ENCODE measurements at regions of chr7 and their contacts with region 1.

Region 1: GRCh38 chr7:27774717-27775328 is 34.9 kb downstream of the TAX1BP1 start:
- DNase-seq: peak in 4 of 9 donors; percentile 6 to 21 (median 15)
- ATAC-seq: no peak
- H3K4me3 ChIP-seq: no peak overlapping the region
- H3K4me3 Mint-ChIP-seq: no peak overlapping the region
- H3K27ac ChIP-seq: no peak overlapping the region
- H3K27ac Mint-ChIP-seq: no peak overlapping the region
- H3K4me1 ChIP-seq: no peaks in the 10 kb centered on the region
- H3K4me1 Mint-ChIP-seq: peaks cover 6 to 72% (median 49%) of the 10 kb centered on the region in 7 donors
- H3K27me3 ChIP-seq: no peaks in the 10 kb centered on the region
- H3K27me3 Mint-ChIP-seq: no peaks in the 10 kb centered on the region

Region 2: GRCh38 chr7:27210441-27211083 is 564.3 kb before region 1 on chr7:
- CTCF ChIA-PET with region 1: no interaction called
- POLR2A ChIA-PET with region 1: no interaction called
- intact Hi-C with region 1: loop called (anchors 1 to 5 kb)
- DNase-seq: peak in 2 of 9 donors; percentile 28 to 47
- ATAC-seq: peak; percentile 74
- H3K4me3 ChIP-seq: no peak overlapping the region
- H3K4me3 Mint-ChIP-seq: peak overlapping the region; percentile 35 to 79 (median 66)
- H3K27ac ChIP-seq: no peak overlapping the region
- H3K27ac Mint-ChIP-seq: no peak overlapping the region
- H3K4me1 ChIP-seq: peaks cover 4 to 7% of the 10 kb centered on the region in 2 donors
- H3K4me1 Mint-ChIP-seq: peaks cover 0 to 29% (median 18%) of the 10 kb centered on the region in 7 donors
- H3K27me3 ChIP-seq: peaks cover 21 to 64% of the 10 kb centered on the region in 2 donors
- H3K27me3 Mint-ChIP-seq: peaks cover 80 to 97% (median 93%) of the 10 kb centered on the region in 5 donors

Region 3: DNA sequence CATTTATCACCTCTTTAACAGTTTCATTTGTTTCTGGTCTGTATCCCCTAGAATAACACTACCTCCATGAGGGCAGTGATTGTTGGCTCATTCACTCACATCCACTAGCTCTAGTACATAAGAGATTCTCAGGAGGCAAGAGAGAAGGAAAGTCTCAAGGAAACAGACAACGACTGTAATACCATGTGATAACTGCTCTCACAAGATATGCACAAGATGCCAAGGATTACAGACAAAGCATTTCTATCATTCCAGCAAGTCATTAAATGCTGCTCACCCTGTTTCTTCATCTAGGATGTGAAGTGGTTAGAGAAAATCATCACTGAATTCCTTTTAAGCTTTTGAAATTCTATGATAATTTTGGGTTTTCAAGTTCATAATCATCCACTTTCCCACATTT is 227.4 kb before region 1 on chr7:
- CTCF ChIA-PET with region 1: no interaction called
- POLR2A ChIA-PET with region 1: no interaction called
- intact Hi-C with region 1: no loop called
- DNase-seq: no peak
- ATAC-seq: no peak
- H3K4me3 ChIP-seq: no peak overlapping the region
- H3K4me3 Mint-ChIP-seq: no peak overlapping the region
- H3K27ac ChIP-seq: no peak overlapping the region
- H3K27ac Mint-ChIP-seq: no peak overlapping the region
- H3K4me1 ChIP-seq: no peaks in the 10 kb centered on the region
- H3K4me1 Mint-ChIP-seq: peaks cover 0 to 6% (median 0%) of the 10 kb centered on the region in 7 donors
- H3K27me3 ChIP-seq: no peaks in the 10 kb centered on the region
- H3K27me3 Mint-ChIP-seq: no peaks in the 10 kb centered on the region

Region 4: DNA sequence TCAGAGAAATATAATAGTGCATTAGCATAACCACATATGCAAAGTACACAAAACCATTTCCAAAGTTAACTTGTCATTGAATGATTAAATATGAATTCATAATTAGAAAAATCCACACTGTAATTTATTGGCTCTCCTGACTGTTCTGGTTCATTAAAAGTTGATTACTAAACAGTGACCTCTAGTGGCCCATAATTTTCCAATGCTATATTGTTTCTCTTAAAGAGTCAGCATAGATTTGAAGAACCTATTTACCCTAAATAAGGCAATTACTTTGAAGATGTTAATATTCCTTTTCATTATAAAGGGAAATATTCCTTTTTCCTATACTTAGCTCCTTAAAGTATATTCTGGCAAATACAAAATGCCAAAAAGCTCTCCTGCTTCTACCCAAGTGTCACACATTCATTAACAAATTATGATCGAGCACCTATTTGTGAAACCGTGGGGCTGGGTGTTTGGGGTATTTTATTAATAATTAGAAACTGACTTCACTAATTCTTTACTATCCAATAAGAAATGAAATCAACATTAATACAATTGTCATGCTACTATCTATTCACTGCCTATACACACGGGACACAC is 198.4 kb before region 1 on chr7:
- CTCF ChIA-PET with region 1: no interaction called
- POLR2A ChIA-PET with region 1: no interaction called
- intact Hi-C with region 1: loop called in 1 of 2 experiments (anchors 5 kb)
- DNase-seq: peak in 5 of 9 donors; percentile 15 to 38 (median 29)
- ATAC-seq: peak; percentile 67
- H3K4me3 ChIP-seq: no peak overlapping the region
- H3K4me3 Mint-ChIP-seq: no peak overlapping the region
- H3K27ac ChIP-seq: no peak overlapping the region
- H3K27ac Mint-ChIP-seq: no peak overlapping the region
- H3K4me1 ChIP-seq: no peaks in the 10 kb centered on the region
- H3K4me1 Mint-ChIP-seq: peaks cover 0 to 6% (median 0%) of the 10 kb centered on the region in 7 donors
- H3K27me3 ChIP-seq: no peaks in the 10 kb centered on the region
- H3K27me3 Mint-ChIP-seq: peaks cover 0 to 3% (median 0%) of the 10 kb centered on the region in 5 donors

Region 5: DNA sequence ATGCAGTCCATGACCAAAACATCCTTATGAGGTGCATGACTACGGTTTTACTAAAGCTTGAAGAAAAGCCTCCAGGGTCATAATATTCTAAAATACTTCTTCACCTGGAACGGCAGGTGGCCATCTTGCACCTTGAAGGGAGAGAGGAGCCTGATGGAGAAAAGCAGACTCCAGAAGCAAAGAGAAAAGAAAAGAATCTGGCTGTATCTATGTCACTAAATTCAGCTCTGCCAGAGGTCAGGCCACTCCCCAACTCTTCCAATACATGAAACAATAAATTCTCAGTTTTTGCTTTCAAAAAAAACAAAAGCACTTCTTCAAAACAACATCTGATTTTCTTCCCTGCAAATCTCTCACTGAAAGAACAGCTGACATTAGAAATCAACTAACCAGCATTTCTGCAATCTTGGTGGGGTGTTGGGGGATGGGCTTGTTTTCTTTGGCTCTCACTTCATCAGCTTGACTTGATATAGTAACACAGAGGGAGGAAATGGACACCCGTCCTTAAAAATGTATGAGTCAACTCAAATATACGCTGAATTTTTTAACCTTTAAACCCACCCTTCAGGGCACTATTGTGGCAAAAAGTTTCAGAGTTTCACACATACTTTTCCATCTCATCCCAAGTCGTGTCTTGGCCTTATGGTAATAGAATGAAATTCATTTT is 133.8 kb before region 1 on chr7:
- CTCF ChIA-PET with region 1: no interaction called
- POLR2A ChIA-PET with region 1: no interaction called
- intact Hi-C with region 1: loop called in 1 of 2 experiments (anchors 2 kb)
- DNase-seq: no peak
- ATAC-seq: no peak
- H3K4me3 ChIP-seq: no peak overlapping the region
- H3K4me3 Mint-ChIP-seq: no peak overlapping the region
- H3K27ac ChIP-seq: no peak overlapping the region
- H3K27ac Mint-ChIP-seq: no peak overlapping the region
- H3K4me1 ChIP-seq: peaks cover 0 to 4% of the 10 kb centered on the region in 2 donors
- H3K4me1 Mint-ChIP-seq: peaks cover 7 to 49% (median 26%) of the 10 kb centered on the region in 7 donors
- H3K27me3 ChIP-seq: no peaks in the 10 kb centered on the region
- H3K27me3 Mint-ChIP-seq: no peaks in the 10 kb centered on the region

Region 6: GRCh38 chr7:27723085-27723484 is 51.7 kb before region 1 on chr7:
- CTCF ChIA-PET with region 1: no interaction called
- POLR2A ChIA-PET with region 1: no interaction called
- intact Hi-C with region 1: no loop called
- DNase-seq: no peak
- ATAC-seq: no peak
- H3K4me3 ChIP-seq: no peak overlapping the region
- H3K4me3 Mint-ChIP-seq: no peak overlapping the region
- H3K27ac ChIP-seq: no peak overlapping the region
- H3K27ac Mint-ChIP-seq: no peak overlapping the region
- H3K4me1 ChIP-seq: no peaks in the 10 kb centered on the region
- H3K4me1 Mint-ChIP-seq: peaks cover 0 to 4% (median 0%) of the 10 kb centered on the region in 7 donors
- H3K27me3 ChIP-seq: no peaks in the 10 kb centered on the region
- H3K27me3 Mint-ChIP-seq: peaks cover 0 to 10% (median 0%) of the 10 kb centered on the region in 5 donors

Region 7: DNA sequence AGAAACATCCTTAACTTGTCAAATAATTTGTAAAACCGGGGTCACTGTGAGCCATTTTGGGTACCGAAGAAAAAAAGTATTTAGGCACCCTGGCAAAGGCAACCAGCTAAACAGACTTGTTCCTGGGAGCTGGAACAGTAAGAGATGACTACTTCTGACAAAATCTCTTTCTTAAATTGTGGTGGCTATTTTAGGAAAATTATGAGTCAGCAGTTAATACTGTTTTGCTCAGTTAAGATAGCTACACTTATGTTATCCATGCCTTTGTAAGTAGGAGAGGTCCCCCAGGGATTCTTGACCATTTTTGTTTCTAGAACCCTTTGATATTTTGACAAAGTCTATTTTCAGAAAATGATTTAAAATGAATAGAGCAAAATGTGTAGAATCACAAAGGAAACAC is 33.8 kb after region 1 on chr7:
- CTCF ChIA-PET with region 1: no interaction called
- POLR2A ChIA-PET with region 1: no interaction called
- intact Hi-C with region 1: no loop called
- DNase-seq: no peak
- ATAC-seq: no peak
- H3K4me3 ChIP-seq: no peak overlapping the region
- H3K4me3 Mint-ChIP-seq: no peak overlapping the region
- H3K27ac ChIP-seq: no peak overlapping the region
- H3K27ac Mint-ChIP-seq: no peak overlapping the region
- H3K4me1 ChIP-seq: no peaks in the 10 kb centered on the region
- H3K4me1 Mint-ChIP-seq: peaks cover 0 to 24% (median 10%) of the 10 kb centered on the region in 7 donors
- H3K27me3 ChIP-seq: no peaks in the 10 kb centered on the region
- H3K27me3 Mint-ChIP-seq: no peaks in the 10 kb centered on the region